ENCODE measurements at regions of chr17 and their contacts with region 1.

Region 1: DNA sequence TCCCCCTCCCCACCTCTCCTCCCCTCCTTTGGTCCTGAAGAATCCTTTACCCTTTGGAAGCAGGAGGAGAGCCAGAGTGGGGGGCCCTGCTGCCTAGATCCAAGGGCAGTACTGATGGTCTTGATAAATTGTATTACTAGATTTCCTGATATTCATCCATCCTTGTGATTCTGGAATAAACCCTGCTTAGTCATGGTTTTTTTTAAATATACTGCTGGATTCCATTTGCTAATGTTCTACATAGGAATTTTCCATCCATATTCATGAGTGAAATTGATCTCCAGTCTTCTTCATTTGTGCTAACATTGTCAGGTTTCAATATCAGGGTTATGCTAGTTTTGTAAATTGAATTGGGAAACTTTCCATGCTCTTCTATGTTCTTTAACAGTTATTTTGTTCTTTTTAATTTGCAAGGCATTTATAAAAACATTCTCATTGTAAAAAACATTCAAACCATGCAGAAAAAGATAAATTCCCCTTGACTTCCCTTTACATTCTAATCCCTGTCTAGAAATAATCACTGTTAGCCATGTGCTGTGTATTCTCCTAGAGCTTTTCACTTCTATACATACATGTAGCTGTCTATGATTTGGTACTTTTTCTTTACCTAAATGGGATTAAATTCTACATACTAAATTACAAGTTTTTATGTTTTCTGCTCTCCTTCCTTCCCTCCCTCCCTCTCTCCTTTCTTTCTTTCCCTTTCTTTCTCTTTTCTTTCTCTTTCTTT is 56.7 kb downstream of the CCDC42 start:
- DNase-seq: no peak
- H3K4me3 ChIP-seq: no peak overlapping the region
- H3K27ac ChIP-seq: no peak overlapping the region
- H3K4me1 ChIP-seq: no peaks in the 10 kb centered on the region
- H3K27me3 ChIP-seq: no peaks in the 10 kb centered on the region
- CTCF ChIP-seq: no peak

Region 2: DNA sequence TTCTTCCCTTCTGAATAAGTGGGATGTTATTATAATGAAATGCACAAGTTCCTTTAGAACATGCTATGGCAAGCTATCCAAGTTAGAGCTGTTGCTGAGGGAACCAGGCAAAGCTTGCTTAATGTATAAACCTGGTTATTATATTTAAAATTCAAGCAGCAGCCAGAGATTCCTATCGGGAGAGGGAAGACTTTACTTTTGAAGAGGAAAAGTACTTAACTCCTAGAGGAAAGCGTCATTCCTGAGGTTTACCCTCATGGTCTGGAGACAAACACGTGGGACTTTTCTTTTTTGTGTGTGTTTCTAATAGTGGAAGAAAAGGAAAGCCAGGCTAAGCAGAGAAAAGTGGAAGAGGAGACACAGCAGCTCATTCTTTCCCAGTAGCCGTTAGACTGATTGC is 17.5 kb before region 1 on chr17:
- intact Hi-C with region 1: loop called (anchors 2 kb)
- DNase-seq: no peak
- H3K4me3 ChIP-seq: no peak overlapping the region
- H3K27ac ChIP-seq: no peak overlapping the region
- H3K4me1 ChIP-seq: no peaks in the 10 kb centered on the region
- H3K27me3 ChIP-seq: no peaks in the 10 kb centered on the region
- CTCF ChIP-seq: no peak

Measured in colonic mucosa (tissue), 4 donors.